ENCODE measurements at regions of chr20 and their contacts with region 1.

Region 1: GRCh38 chr20:21571841-21572690 is 58.2 kb upstream of the NKX2-2 start:
- DNase-seq: peak; percentile 25 to 31 (median 26)
- ATAC-seq: 0 out of 3 replicates have a peak, but pooled peaks have one; percentile 39
- H3K4me3 ChIP-seq: no peak overlapping the region
- H3K27ac ChIP-seq: no peak overlapping the region
- H3K4me1 ChIP-seq: no peaks in the 10 kb centered on the region; a peak in 2 of 5 replicates
- H3K27me3 ChIP-seq: peaks cover 0 to 5% of the 10 kb centered on the region in 2 experiments; a peak in 2 of 5 replicates
- CTCF ChIP-seq: peak; percentile 51 to 77 (median 67)
- EP300 ChIP-seq: no peak
- POLR2A ChIP-seq: no peak
- RAD21 ChIP-seq: peak; percentile 27 to 53

Region 2: DNA sequence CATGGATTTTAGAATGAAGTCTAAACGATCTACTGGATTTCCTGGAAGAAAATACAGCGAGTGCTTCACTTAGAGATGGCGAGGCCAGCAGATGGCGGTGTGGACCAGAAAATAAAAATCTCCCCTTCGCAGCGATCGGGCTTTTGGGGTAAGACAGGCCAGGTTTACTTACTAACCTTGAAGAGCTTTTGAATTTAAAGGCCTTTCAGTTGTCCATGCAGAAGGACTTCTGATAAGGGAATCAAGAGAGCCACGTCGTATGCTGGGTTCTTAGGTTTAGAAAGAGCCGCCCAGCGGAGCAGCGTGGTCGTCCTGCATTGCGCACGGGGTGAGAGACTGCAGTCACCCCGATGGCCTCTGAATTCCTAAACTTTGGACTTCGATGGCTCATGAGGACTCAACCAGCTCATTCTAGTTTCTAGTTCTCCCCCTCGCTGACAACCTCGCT is 734.5 kb before region 1 on chr20:
- CTCF ChIA-PET with region 1: no interaction called
- POLR2A ChIA-PET with region 1: no interaction called
- in situ Hi-C with region 1: no loop called
- intact Hi-C with region 1: loop called (anchors 2 kb)
- DNase-seq: peak; percentile 25 to 51 (median 36)
- ATAC-seq: peak; percentile 81
- H3K4me3 ChIP-seq: no peak overlapping the region
- H3K27ac ChIP-seq: no peak overlapping the region
- H3K4me1 ChIP-seq: no peaks in the 10 kb centered on the region
- H3K27me3 ChIP-seq: peaks cover 0 to 11% of the 10 kb centered on the region in 2 experiments; a peak in 2 of 5 replicates
- CTCF ChIP-seq: peak; percentile 52 to 66 (median 63); a peak in 5 of 6 replicates
- EP300 ChIP-seq: no peak
- POLR2A ChIP-seq: no peak
- RAD21 ChIP-seq: peak; percentile 57 to 60; a peak in 3 of 4 replicates

Region 3: DNA sequence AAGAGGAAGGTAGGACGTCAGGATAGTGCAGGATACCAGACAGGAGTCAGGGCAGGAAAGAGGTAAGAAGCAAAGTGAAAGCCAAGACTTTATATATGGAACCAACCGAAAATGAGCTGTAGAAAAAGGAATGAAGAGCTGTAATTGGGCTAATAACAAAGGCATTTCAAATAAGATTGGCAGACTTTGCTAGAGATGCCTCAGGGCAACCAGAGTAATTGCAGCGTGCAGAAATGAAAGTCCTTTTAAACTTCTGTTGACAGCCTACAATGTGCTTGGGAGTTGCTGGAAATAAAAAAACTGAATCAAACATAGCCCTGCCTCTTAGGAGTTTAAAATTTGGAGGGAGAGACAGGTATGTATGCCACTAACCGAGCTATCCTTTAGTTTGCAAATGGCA is 118.4 kb before region 1 on chr20:
- CTCF ChIA-PET with region 1: no interaction called
- POLR2A ChIA-PET with region 1: no interaction called
- in situ Hi-C with region 1: no loop called
- intact Hi-C with region 1: no loop called
- DNase-seq: no peak
- ATAC-seq: no peak
- H3K4me3 ChIP-seq: no peak overlapping the region
- H3K27ac ChIP-seq: no peak overlapping the region
- H3K4me1 ChIP-seq: no peaks in the 10 kb centered on the region
- H3K27me3 ChIP-seq: no peaks in the 10 kb centered on the region
- CTCF ChIP-seq: no peak
- EP300 ChIP-seq: no peak
- POLR2A ChIP-seq: no peak
- RAD21 ChIP-seq: no peak